Endothelial cell of umbilical vein (primary cell): ENCODE measurements at regions of chr2 and their contacts with region 1.

Region 1: GRCh38 chr2:146477383-146477782 is 1367.4 kb upstream of the ACVR2A start:
- DNase-seq: no peak
- H3K4me3 ChIP-seq: no peak overlapping the region
- H3K27ac ChIP-seq: no peak overlapping the region
- H3K4me1 ChIP-seq: no peaks in the 10 kb centered on the region
- H3K27me3 ChIP-seq: no peaks in the 10 kb centered on the region
- CTCF ChIP-seq: no peak
- POLR2A ChIP-seq: no peak

Region 2: GRCh38 chr2:144924827-144925226 is 1552.6 kb before region 1 on chr2:
- CTCF ChIA-PET with region 1: no interaction called
- POLR2A ChIA-PET with region 1: no interaction called
- dilution Hi-C with region 1: no loop called
- intact Hi-C with region 1: loop called (anchors 5 kb)
- DNase-seq: no peak
- H3K4me3 ChIP-seq: no peak overlapping the region
- H3K27ac ChIP-seq: no peak overlapping the region
- H3K4me1 ChIP-seq: no peaks in the 10 kb centered on the region
- H3K27me3 ChIP-seq: no peaks in the 10 kb centered on the region
- CTCF ChIP-seq: no peak
- POLR2A ChIP-seq: no peak

Region 3: GRCh38 chr2:146374505-146374904 is 102.9 kb before region 1 on chr2:
- CTCF ChIA-PET with region 1: no interaction called
- POLR2A ChIA-PET with region 1: no interaction called
- dilution Hi-C with region 1: no loop called
- intact Hi-C with region 1: no loop called
- DNase-seq: no peak
- H3K4me3 ChIP-seq: no peak overlapping the region
- H3K27ac ChIP-seq: no peak overlapping the region
- H3K4me1 ChIP-seq: no peaks in the 10 kb centered on the region
- H3K27me3 ChIP-seq: no peaks in the 10 kb centered on the region
- CTCF ChIP-seq: no peak
- POLR2A ChIP-seq: no peak

Region 4: GRCh38 chr2:146826388-146826787 is 349.0 kb after region 1 on chr2:
- CTCF ChIA-PET with region 1: no interaction called
- POLR2A ChIA-PET with region 1: no interaction called
- dilution Hi-C with region 1: no loop called
- intact Hi-C with region 1: no loop called
- DNase-seq: no peak
- H3K4me3 ChIP-seq: no peak overlapping the region
- H3K27ac ChIP-seq: no peak overlapping the region
- H3K4me1 ChIP-seq: peaks cover 16% of the 10 kb centered on the region
- H3K27me3 ChIP-seq: no peaks in the 10 kb centered on the region
- CTCF ChIP-seq: no peak
- POLR2A ChIP-seq: no peak